ENCODE measurements at regions of chr6 and their contacts with region 1.

Region 1: GRCh38 chr6:95577304-95578105 is at the start of gene MANEA:
- DNase-seq: peak; percentile 79 to 89
- ATAC-seq: peak; percentile 83 to 94 (median 87)
- H3K4me3 ChIP-seq: peak within 1 kb of the TSS; percentile 76
- H3K4me3 Mint-ChIP-seq: peak within 1 kb of the TSS; percentile 97
- H3K27ac ChIP-seq: peak within 1 kb of the TSS; percentile 93
- H3K27ac Mint-ChIP-seq: peak within 1 kb of the TSS; percentile 97 to 99
- H3K4me1 ChIP-seq: peaks cover 4% of the 10 kb centered on the region
- H3K4me1 Mint-ChIP-seq: peaks cover 35% of the 10 kb centered on the region in 2 donors
- H3K27me3 ChIP-seq: no peaks in the 10 kb centered on the region
- H3K27me3 Mint-ChIP-seq: no peaks in the 10 kb centered on the region
- CTCF ChIP-seq: no peak
- total RNA-seq, gene MANEA: 4.7 to 10.6 (median 5.7) TPM

Region 2: DNA sequence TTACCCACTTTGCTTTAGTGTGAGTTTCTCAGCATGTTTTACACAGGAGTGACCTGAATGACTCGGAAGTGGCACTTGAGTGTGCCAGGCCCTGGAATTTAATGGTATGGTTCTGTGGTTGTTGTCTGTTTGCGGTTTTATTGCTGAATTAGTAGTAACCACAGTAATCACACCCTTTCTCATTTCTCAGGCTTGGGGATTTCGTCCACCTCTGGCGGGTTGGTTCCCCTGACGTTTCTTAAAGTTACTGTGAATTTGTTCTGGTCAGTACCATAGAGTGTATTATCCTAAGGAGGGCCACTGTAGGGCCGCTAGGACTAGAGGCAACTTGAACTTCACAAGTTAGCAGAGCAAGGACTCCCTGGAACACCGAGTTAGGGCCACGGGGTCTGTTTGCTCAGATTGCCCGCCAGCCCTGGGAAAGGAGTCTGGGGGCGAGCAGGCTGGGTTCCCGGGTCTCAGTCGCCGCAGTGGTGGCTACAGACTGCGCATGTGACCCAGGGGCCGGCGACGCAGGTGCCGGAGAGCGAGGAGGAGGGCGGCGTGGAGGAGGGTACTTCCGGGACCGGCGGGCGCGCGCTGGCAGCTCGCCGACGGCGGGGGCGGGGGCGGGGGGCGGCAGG is 1346.5 kb after region 1 on chr6:
- intact Hi-C with region 1: loop called (anchors 5 kb)
- DNase-seq: peak in 1 of 2 donors; percentile 74
- ATAC-seq: peak; percentile 33 to 55 (median 52)
- H3K4me3 ChIP-seq: peak overlapping the region; percentile 65
- H3K4me3 Mint-ChIP-seq: peak overlapping the region; percentile 94
- H3K27ac ChIP-seq: peak overlapping the region; percentile 98
- H3K27ac Mint-ChIP-seq: peak overlapping the region; percentile 94 to 96
- H3K4me1 ChIP-seq: peaks cover 14% of the 10 kb centered on the region
- H3K4me1 Mint-ChIP-seq: peaks cover 23 to 32% of the 10 kb centered on the region in 2 donors
- H3K27me3 ChIP-seq: no peaks in the 10 kb centered on the region
- H3K27me3 Mint-ChIP-seq: peaks cover 10 to 29% of the 10 kb centered on the region in 2 donors
- CTCF ChIP-seq: no peak

Measured in natural killer cell (primary cell).